ENCODE measurements at regions of chr12 and their contacts with region 1.

Region 1: DNA sequence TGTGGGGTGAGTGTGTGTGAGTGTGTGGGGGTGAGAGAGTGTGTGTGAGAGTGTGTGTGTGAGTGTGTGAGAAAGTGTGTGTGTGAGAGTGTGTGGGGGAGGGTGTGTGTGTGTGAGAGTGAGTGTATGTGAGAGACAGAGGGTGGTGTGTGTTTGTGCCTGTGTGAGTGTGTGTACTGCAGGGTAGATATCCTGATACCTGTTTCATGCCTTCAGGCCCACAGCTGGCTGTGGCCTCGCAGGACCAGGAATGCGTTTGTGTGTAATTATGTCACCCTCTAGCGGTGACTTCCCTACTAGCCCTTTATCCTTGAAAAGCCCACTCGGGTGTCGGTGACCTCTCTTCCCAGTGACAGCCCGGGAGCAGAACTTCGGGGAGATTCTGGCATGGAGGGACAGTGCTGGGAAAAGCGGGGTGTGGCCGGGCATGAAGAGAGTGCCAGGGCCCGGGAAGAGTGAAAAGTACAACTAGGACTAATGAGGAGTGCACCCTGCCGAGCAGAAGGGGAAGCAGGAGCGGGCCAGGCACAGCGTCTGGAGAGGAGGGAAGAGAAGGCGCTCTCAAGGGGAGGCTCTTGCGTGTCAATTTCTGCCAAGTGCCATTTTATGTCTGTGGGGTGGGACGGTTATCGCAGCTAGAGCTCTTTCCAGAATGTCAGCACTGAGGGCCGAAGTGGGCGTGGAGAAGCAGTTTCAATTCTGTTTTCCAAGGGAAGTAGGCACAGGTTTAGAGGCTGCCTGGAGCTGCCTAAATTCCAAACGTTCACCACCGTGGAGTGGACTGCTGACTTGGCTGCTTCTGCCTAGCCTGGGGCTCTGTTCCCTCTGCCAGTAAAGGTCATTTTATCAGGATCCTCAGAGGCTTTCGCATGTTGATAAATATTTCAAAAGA is 11.0 kb upstream of the FBXL14 start:
- DNase-seq: peak; percentile 32 to 76 (median 68)
- ATAC-seq: peak; percentile 83
- H3K4me3 ChIP-seq: peak overlapping the region; percentile 55
- H3K4me3 Mint-ChIP-seq: peak overlapping the region; percentile 80 to 94 (median 86)
- H3K27ac ChIP-seq: no peak overlapping the region
- H3K27ac Mint-ChIP-seq: peak overlapping the region in 8 of 9 donors; percentile 27 to 87 (median 56)
- H3K4me1 ChIP-seq: peaks cover 13 to 15% of the 10 kb centered on the region in 2 donors
- H3K4me1 Mint-ChIP-seq: peaks cover 20 to 44% (median 38%) of the 10 kb centered on the region in 7 donors
- H3K27me3 ChIP-seq: no peaks in the 10 kb centered on the region
- H3K27me3 Mint-ChIP-seq: peaks cover 0 to 8% (median 0%) of the 10 kb centered on the region in 5 donors

Region 2: GRCh38 chr12:1117970-1118563 is 487.3 kb before region 1 on chr12:
- CTCF ChIA-PET with region 1: interaction called, 52 read pairs
- POLR2A ChIA-PET with region 1: interaction called, 9 read pairs
- intact Hi-C with region 1: loop called (anchors 1 kb)
- DNase-seq: peak; percentile 25 to 70 (median 63)
- ATAC-seq: peak; percentile 74
- H3K4me3 ChIP-seq: no peak overlapping the region
- H3K4me3 Mint-ChIP-seq: no peak overlapping the region
- H3K27ac ChIP-seq: no peak overlapping the region
- H3K27ac Mint-ChIP-seq: no peak overlapping the region
- H3K4me1 ChIP-seq: peaks cover 4 to 7% of the 10 kb centered on the region in 2 donors
- H3K4me1 Mint-ChIP-seq: peaks cover 7 to 16% (median 9%) of the 10 kb centered on the region in 7 donors
- H3K27me3 ChIP-seq: no peaks in the 10 kb centered on the region
- H3K27me3 Mint-ChIP-seq: no peaks in the 10 kb centered on the region

Region 3: GRCh38 chr12:1204581-1205121 is 400.7 kb before region 1 on chr12:
- CTCF ChIA-PET with region 1: no interaction called
- POLR2A ChIA-PET with region 1: interaction called, 4 read pairs
- intact Hi-C with region 1: loop called (anchors 2 to 10 kb)
- DNase-seq: peak in 7 of 9 donors; percentile 14 to 69 (median 57)
- ATAC-seq: peak; percentile 86
- H3K4me3 ChIP-seq: peak overlapping the region; percentile 66
- H3K4me3 Mint-ChIP-seq: no peak overlapping the region
- H3K27ac ChIP-seq: peak overlapping the region; percentile 69
- H3K27ac Mint-ChIP-seq: no peak overlapping the region
- H3K4me1 ChIP-seq: peaks cover 4 to 15% of the 10 kb centered on the region in 2 donors
- H3K4me1 Mint-ChIP-seq: peaks cover 10 to 17% (median 10%) of the 10 kb centered on the region in 7 donors
- H3K27me3 ChIP-seq: no peaks in the 10 kb centered on the region
- H3K27me3 Mint-ChIP-seq: no peaks in the 10 kb centered on the region

Region 4: GRCh38 chr12:1398673-1399072 is 206.7 kb before region 1 on chr12:
- CTCF ChIA-PET with region 1: no interaction called
- POLR2A ChIA-PET with region 1: no interaction called
- intact Hi-C with region 1: loop called in 1 of 2 experiments (anchors 5 kb)
- DNase-seq: no peak
- ATAC-seq: no peak
- H3K4me3 ChIP-seq: no peak overlapping the region
- H3K4me3 Mint-ChIP-seq: no peak overlapping the region
- H3K27ac ChIP-seq: no peak overlapping the region
- H3K27ac Mint-ChIP-seq: no peak overlapping the region
- H3K4me1 ChIP-seq: no peaks in the 10 kb centered on the region
- H3K4me1 Mint-ChIP-seq: peaks cover 0 to 3% (median 0%) of the 10 kb centered on the region in 7 donors
- H3K27me3 ChIP-seq: no peaks in the 10 kb centered on the region
- H3K27me3 Mint-ChIP-seq: no peaks in the 10 kb centered on the region

Region 5: DNA sequence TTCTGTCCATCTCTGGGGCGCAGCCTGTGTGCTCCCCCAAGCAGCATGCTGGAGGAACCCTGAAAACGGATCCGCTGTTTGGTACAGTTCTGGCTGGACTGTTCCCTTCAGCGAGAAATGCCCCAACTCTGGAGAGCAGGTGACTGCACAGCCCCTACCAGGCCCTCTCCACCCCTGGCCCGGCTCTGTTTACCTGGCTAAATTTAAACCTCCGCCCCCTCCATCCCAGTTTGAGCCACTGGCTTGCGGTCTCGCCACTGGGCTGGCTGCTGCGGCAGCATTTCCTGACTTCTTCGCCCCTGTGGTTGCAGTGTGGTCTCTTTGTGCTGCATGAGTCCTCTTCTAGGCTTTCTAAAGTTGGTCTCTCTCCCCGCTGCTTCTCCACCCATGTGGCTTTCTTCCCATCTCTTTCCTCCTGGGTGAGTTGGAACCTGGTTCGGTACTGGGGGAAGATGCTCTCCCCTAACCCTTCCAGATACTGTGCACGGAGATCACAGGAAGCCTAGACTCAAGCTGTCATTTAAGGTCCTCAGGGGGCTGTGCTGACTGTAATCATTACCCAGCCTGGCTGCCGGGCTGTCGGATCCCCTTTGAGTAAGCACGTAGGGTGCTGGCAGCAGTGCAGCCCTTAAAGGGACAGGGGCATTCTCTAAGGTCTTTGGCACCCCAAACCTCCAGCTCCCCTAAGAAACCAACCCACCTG is 71.6 kb before region 1 on chr12:
- CTCF ChIA-PET with region 1: interaction called, 5 read pairs
- POLR2A ChIA-PET with region 1: no interaction called
- intact Hi-C with region 1: loop called in 1 of 2 experiments (anchors 1 kb)
- DNase-seq: peak in 6 of 9 donors; percentile 12 to 68 (median 30)
- ATAC-seq: peak; percentile 58
- H3K4me3 ChIP-seq: peak overlapping the region; percentile 48
- H3K4me3 Mint-ChIP-seq: peak overlapping the region; percentile 81 to 89 (median 85)
- H3K27ac ChIP-seq: no peak overlapping the region
- H3K27ac Mint-ChIP-seq: peak overlapping the region in 1 of 9 donors; percentile 40
- H3K4me1 ChIP-seq: peaks cover 32 to 34% of the 10 kb centered on the region in 2 donors
- H3K4me1 Mint-ChIP-seq: peaks cover 25 to 38% (median 29%) of the 10 kb centered on the region in 7 donors
- H3K27me3 ChIP-seq: peaks cover 19 to 36% of the 10 kb centered on the region in 2 donors
- H3K27me3 Mint-ChIP-seq: peaks cover 63 to 80% (median 77%) of the 10 kb centered on the region in 5 donors

Region 6: GRCh38 chr12:1583421-1584078 is 21.8 kb before region 1 on chr12:
- CTCF ChIA-PET with region 1: interaction called, 39 read pairs
- POLR2A ChIA-PET with region 1: interaction called, 24 read pairs
- intact Hi-C with region 1: loop called in 1 of 2 experiments (anchors 1 kb)
- DNase-seq: peak in 8 of 9 donors; percentile 42 to 73 (median 64)
- ATAC-seq: peak; percentile 84
- H3K4me3 ChIP-seq: no peak overlapping the region
- H3K4me3 Mint-ChIP-seq: peak overlapping the region in 4 of 10 donors; percentile 17 to 64 (median 44)
- H3K27ac ChIP-seq: no peak overlapping the region
- H3K27ac Mint-ChIP-seq: peak overlapping the region in 6 of 9 donors; percentile 1 to 66 (median 48)
- H3K4me1 ChIP-seq: peaks cover 6 to 13% of the 10 kb centered on the region in 2 donors
- H3K4me1 Mint-ChIP-seq: peaks cover 15 to 26% (median 23%) of the 10 kb centered on the region in 7 donors
- H3K27me3 ChIP-seq: no peaks in the 10 kb centered on the region
- H3K27me3 Mint-ChIP-seq: peaks cover 0 to 3% (median 0%) of the 10 kb centered on the region in 5 donors